WTC11 (cell line): ENCODE measurements at regions of chr1 and their contacts with region 1.

Region 1: DNA sequence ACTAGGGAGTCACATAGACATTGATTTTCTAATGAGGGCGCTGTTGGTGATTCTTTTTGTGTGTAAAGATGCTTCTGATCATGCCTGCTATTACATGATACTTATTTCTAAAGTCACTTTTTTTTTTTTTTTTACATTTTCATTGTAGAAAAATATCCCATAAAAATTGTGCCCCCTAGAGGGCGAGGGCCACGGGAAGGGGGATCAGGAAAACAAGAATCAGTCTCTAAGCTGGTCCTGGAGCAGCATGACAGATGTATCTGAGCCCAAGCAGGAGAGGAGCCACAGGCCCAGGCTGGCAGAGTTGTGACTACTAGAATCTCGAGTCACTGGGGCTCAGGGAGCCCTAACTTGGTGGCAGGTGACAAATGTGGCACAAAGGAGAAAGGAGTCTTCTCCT is 28.1 kb downstream of the ZSCAN20 start:
- DNase-seq: no peak
- ATAC-seq: peak; percentile 61
- H3K4me3 Mint-ChIP-seq: no peak overlapping the region
- H3K27ac Mint-ChIP-seq: no peak overlapping the region
- H3K4me1 Mint-ChIP-seq: peaks cover 9% of the 10 kb centered on the region
- H3K27me3 Mint-ChIP-seq: no peaks in the 10 kb centered on the region; the same call in 1 of the 2 replicates
- CTCF ChIP-seq: no peak

Region 2: GRCh38 chr1:33410091-33410701 is 90.4 kb before region 1 on chr1:
- CTCF ChIA-PET with region 1: no interaction called
- POLR2A ChIA-PET with region 1: no interaction called
- DNase-seq: no peak
- ATAC-seq: peak; percentile 77
- H3K4me3 Mint-ChIP-seq: no peak overlapping the region
- H3K27ac Mint-ChIP-seq: no peak overlapping the region
- H3K4me1 Mint-ChIP-seq: peaks cover 5% of the 10 kb centered on the region; the same call in 1 of the 2 replicates
- H3K27me3 Mint-ChIP-seq: peaks cover 3% of the 10 kb centered on the region; the same call in 1 of the 2 replicates
- CTCF ChIP-seq: no peak

Region 3: GRCh38 chr1:33482412-33482811 is 18.1 kb before region 1 on chr1:
- CTCF ChIA-PET with region 1: interaction called, 10 read pairs
- POLR2A ChIA-PET with region 1: no interaction called
- DNase-seq: no peak
- ATAC-seq: no peak
- H3K4me3 Mint-ChIP-seq: no peak overlapping the region
- H3K27ac Mint-ChIP-seq: no peak overlapping the region
- H3K4me1 Mint-ChIP-seq: no peaks in the 10 kb centered on the region
- H3K27me3 Mint-ChIP-seq: no peaks in the 10 kb centered on the region; the same call in 1 of the 2 replicates
- CTCF ChIP-seq: no peak

Region 4: DNA sequence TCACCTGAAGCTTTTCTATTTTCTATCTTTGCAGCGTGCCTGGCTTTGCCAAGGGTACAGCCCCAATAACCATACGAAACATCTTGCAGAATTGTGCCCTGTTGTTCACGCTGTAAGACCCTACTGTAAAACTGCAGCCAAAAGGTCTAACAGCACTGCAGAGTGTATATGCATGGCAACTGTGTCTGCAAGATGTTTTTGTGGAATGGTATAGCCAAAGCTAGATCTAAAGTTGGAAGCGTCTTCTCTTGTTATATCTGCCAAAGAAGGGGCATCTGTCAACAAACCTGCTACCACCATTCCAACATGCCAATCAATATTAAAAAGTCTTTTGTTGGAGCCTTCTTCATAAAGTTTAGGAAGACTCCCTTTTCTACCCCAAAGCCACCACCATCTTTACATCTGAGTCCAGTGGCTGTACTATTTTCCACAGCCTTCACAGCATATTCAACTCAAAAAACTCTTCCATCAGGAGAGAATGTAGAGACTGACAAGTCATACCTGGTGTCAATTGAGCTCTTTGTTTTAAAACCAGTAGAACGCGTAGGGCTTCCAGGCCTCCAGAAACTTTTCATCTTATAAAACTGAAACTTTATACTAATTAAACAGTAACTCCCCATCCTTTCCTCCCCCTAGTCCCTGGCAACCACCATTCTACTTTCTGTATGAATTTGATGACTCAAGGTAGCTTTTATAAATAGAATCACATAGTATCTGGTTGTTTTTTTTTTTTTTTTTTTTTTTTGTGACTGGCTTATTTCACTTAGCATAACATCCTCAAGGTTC is 11.9 kb after region 1 on chr1:
- CTCF ChIA-PET with region 1: interaction called, 10 read pairs
- POLR2A ChIA-PET with region 1: interaction called, 4 read pairs
- DNase-seq: no peak
- ATAC-seq: no peak
- H3K4me3 Mint-ChIP-seq: no peak overlapping the region
- H3K27ac Mint-ChIP-seq: no peak overlapping the region
- H3K4me1 Mint-ChIP-seq: peaks cover 19% of the 10 kb centered on the region
- H3K27me3 Mint-ChIP-seq: peaks cover 9% of the 10 kb centered on the region
- CTCF ChIP-seq: no peak

Region 5: DNA sequence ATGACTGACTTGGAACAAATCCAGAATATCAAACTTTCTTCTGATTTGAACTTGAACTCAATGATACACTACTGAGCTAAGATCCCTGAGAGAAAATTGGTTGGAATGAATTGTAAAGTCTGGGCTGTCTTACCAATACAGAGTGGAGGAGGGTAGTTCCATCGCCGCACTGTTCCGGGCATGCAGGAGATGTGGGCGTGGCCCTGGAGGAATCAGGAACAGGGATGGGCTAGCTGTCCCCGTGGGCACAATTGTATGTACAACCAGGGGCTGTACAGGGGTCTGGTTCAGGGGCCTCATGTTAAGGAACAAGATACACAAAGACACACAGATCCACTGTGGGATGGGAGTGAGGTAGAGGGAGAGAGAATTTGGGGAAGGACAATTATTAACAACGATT is 116.2 kb after region 1 on chr1:
- CTCF ChIA-PET with region 1: interaction called, 14 read pairs
- POLR2A ChIA-PET with region 1: no interaction called
- DNase-seq: no peak
- ATAC-seq: no peak
- H3K4me3 Mint-ChIP-seq: no peak overlapping the region
- H3K27ac Mint-ChIP-seq: no peak overlapping the region
- H3K4me1 Mint-ChIP-seq: no peaks in the 10 kb centered on the region
- H3K27me3 Mint-ChIP-seq: peaks cover 5% of the 10 kb centered on the region
- CTCF ChIP-seq: no peak